Esophagus squamous epithelium (tissue), 5 donors: ENCODE measurements at regions of chr18 and their contacts with region 1.

Region 1: DNA sequence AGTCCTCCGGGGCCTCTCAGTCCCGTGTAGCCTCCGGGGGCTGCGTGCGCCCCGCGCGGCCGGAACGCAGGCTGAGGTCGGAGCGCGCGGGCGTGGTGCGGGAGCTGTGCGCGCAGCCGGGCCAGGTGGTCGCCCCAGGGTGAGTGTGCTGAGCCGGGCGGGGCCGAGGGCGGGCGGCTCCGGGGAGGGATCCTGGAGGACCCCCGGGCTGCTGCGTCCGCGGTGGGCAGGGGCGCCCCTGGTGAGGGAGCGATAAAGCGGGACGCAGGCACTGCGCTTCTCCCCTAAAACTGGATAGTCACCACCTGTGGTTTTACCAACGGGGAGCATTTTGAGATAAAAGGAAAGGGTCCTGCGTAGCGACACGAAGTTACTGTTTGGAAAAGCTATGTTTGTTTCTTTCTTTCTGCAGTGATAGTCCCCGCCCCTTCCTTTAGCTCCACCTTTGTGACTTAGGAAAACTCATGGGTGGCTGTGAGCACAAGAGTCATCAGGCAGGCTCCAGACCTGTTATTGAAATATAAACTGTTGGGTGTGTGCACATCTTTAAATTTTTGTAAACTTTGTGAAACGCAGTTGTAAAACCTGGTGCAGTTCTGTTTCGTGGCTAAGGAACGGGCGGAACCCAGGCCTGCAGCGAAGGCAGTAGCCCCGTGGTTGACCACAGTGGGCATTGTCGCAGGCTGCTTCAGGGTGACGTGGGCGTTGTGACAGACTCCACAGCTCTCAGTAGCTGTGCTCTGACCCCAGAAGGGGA is 698 bp downstream of the CTDP1 start:
- DNase-seq: no peak
- H3K4me3 ChIP-seq: peak overlapping the region; percentile 68 to 100 (median 84)
- H3K27ac ChIP-seq: peak overlapping the region; percentile 93 to 100 (median 98)
- H3K4me1 ChIP-seq: peaks cover 24 to 60% (median 25%) of the 10 kb centered on the region in 3 donors
- H3K27me3 ChIP-seq: no peaks in the 10 kb centered on the region
- CTCF ChIP-seq: no peak
- POLR2A ChIP-seq: no peak

Region 2: DNA sequence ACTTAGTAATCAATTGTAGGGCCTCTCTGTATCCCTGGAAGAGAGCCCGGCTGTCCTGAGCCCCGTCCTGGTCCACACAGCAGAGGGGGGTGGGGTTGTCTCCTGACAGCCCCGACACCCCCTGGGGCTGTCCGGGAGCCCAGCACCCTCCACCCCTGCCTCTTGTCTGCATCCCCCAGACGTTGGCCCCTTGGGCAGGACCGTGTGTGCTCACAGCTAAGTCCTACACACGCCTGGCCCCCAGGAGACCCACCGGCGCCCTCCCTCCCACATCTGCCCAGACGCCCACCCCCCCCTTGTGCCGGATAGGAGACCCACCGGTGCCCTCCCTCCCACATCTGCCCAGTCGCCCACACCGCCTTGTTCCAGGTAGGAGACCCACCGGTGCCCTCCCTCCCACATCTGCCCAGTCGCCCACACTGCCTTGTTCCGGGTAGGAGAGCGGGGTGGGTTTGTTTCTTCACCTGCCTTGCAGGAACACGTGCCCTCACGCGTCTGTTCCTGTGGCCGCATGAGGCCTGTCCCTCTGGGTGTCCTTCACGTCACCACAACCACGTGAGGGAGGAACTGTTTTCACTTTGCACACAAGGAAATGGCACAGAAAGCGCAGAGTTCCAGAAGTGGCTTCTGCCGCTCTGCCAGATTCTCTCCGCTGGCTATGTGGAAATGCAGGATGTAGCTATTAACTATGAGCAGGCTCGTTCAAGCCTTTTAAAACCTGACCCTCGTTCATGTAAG is 345.6 kb before region 1 on chr18:
- intact Hi-C with region 1: no loop called
- DNase-seq: no peak
- H3K4me3 ChIP-seq: no peak overlapping the region
- H3K27ac ChIP-seq: no peak overlapping the region
- H3K4me1 ChIP-seq: no peaks in the 10 kb centered on the region
- H3K27me3 ChIP-seq: no peaks in the 10 kb centered on the region
- CTCF ChIP-seq: no peak
- POLR2A ChIP-seq: no peak

Region 3: GRCh38 chr18:79749251-79750191 is 69.2 kb after region 1 on chr18:
- intact Hi-C with region 1: no loop called
- DNase-seq: no peak
- H3K4me3 ChIP-seq: no peak overlapping the region
- H3K27ac ChIP-seq: no peak overlapping the region
- H3K4me1 ChIP-seq: peaks cover 0 to 8% (median 0%) of the 10 kb centered on the region in 3 donors
- H3K27me3 ChIP-seq: no peaks in the 10 kb centered on the region
- CTCF ChIP-seq: no peak
- POLR2A ChIP-seq: no peak

Region 4: GRCh38 chr18:79944126-79944741 is 263.9 kb after region 1 on chr18:
- intact Hi-C with region 1: loop called (anchors 10 kb)
- DNase-seq: no peak
- H3K4me3 ChIP-seq: no peak overlapping the region
- H3K27ac ChIP-seq: no peak overlapping the region
- H3K4me1 ChIP-seq: peaks cover 11 to 100% (median 46%) of the 10 kb centered on the region in 3 donors
- H3K27me3 ChIP-seq: no peaks in the 10 kb centered on the region
- CTCF ChIP-seq: no peak
- POLR2A ChIP-seq: no peak

Region 5: GRCh38 chr18:80034068-80034851 is 354.0 kb after region 1 on chr18 and contains the start of gene RBFA:
- intact Hi-C with region 1: loop called (anchors 10 kb)
- DNase-seq: peak; percentile 89
- H3K4me3 ChIP-seq: peak within 1 kb of the TSS; percentile 59 to 81 (median 72)
- H3K27ac ChIP-seq: peak within 1 kb of the TSS; percentile 89 to 98 (median 94)
- H3K4me1 ChIP-seq: peaks cover 4 to 24% (median 9%) of the 10 kb centered on the region in 3 donors
- H3K27me3 ChIP-seq: no peaks in the 10 kb centered on the region
- CTCF ChIP-seq: peak in 5 of 6 experiments; percentile 44 to 68 (median 65)
- POLR2A ChIP-seq: peak in 3 of 4 donors; percentile 51 to 77 (median 63)
- total RNA-seq, gene RBFA: 15.5 to 36.7 (median 28.8) TPM